ENCODE measurements at regions of chr15 and their contacts with region 1.

Region 1: DNA sequence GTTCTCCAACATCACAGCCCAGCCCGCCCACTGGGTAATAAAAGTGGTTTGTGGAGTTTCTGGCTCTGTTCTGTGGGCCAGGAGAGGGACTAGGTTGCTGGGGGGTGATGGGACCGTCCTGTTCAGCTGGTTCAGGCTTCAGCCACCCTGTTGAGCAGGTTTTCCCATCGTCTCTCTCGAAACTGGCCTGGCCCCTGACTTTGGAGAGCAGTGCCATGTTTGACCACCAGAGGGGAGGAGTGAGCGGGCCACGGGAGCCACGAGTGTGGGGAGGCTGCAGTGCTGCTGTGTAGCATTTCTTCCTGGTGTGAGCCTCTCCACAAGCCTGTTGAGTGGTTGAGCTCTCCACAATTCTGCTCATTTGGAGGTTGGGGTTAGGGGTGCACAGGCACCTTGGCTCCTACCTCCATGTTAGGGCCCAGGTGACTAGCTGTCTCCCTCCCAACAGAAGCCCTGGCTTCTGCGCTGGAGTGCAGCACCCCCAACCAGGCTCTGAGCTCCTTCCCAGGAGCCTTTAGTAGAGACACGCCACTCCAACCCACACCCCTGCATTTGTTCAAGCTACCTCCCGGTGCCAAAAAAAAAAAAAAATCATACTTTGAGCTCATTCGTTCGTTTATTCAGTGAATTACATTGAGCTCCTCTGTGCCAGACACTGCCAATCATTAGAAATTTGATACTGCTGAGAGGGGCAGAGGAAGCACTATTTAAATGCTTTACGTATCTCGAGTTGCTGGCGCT is 13.9 kb downstream of the SPINT1 start:
- DNase-seq: peak; percentile 83 to 88
- H3K4me3 ChIP-seq: no peak overlapping the region
- H3K27ac ChIP-seq: peak overlapping the region in 2 of 3 donors; percentile 58 to 65
- H3K4me1 ChIP-seq: peaks cover 5 to 9% of the 10 kb centered on the region in 2 donors
- H3K27me3 ChIP-seq: no peaks in the 10 kb centered on the region
- CTCF ChIP-seq: peak; percentile 82 to 97 (median 93)
- POLR2A ChIP-seq: no peak

Region 2: DNA sequence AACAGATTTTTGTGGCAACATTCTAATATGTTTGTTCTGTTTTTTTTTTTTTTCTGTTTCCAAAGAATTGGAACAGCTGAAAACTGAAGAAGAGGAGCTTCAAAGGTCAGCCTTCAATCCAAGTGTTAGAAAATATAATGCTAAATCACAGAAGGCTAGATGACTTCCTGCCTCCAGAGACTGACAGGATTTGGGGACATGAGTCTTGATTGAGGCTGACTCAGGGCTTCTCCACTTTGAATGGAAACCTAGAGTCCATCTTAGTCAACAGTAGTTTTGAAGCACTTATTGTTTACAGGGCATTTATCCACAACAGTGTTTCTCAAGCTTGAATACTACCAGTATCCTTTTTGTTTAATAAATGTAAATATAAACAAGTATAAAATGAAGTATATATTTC is 207.3 kb before region 1 on chr15:
- intact Hi-C with region 1: no loop called
- DNase-seq: no peak
- H3K4me3 ChIP-seq: no peak overlapping the region
- H3K27ac ChIP-seq: no peak overlapping the region
- H3K4me1 ChIP-seq: peaks cover 0 to under 1% of the 10 kb centered on the region in 2 donors
- H3K27me3 ChIP-seq: no peaks in the 10 kb centered on the region
- CTCF ChIP-seq: no peak
- POLR2A ChIP-seq: no peak

Region 3: GRCh38 chr15:41180206-41180789 is 322.5 kb after region 1 on chr15:
- intact Hi-C with region 1: loop called (anchors 5 kb)
- DNase-seq: no peak
- H3K4me3 ChIP-seq: no peak overlapping the region
- H3K27ac ChIP-seq: no peak overlapping the region
- H3K4me1 ChIP-seq: no peaks in the 10 kb centered on the region
- H3K27me3 ChIP-seq: no peaks in the 10 kb centered on the region
- CTCF ChIP-seq: no peak
- POLR2A ChIP-seq: no peak